Ascending aorta (tissue), 2 donors: ENCODE measurements at regions of chr15 and their contacts with region 1.

Region 1: GRCh38 chr15:50908210-50909009 is at the start of gene AP4E1:
- DNase-seq: peak; percentile 65 to 96
- H3K4me3 ChIP-seq: peak within 1 kb of the TSS; percentile 84 to 88
- H3K27ac ChIP-seq: peak within 1 kb of the TSS; percentile 93 to 96
- H3K4me1 ChIP-seq: peaks cover 0 to 24% of the 10 kb centered on the region in 2 donors
- H3K27me3 ChIP-seq: no peaks in the 10 kb centered on the region
- CTCF ChIP-seq: peak; percentile 89 to 99 (median 93)
- total RNA-seq, gene AP4E1: 5.2 TPM

Region 2: GRCh38 chr15:50354838-50355618 is 553.4 kb before region 1 on chr15 and contains the start of gene GABPB1:
- intact Hi-C with region 1: loop called (anchors 10 kb)
- DNase-seq: peak; percentile 31 to 90
- H3K4me3 ChIP-seq: peak within 1 kb of the TSS; percentile 95 to 99
- H3K27ac ChIP-seq: peak within 1 kb of the TSS; percentile 99 to 100
- H3K4me1 ChIP-seq: peaks cover 12 to 36% of the 10 kb centered on the region in 2 donors
- H3K27me3 ChIP-seq: no peaks in the 10 kb centered on the region
- CTCF ChIP-seq: no peak
- total RNA-seq, gene GABPB1: 10.9 TPM

Region 3: GRCh38 chr15:50675536-50676144 is 232.8 kb before region 1 on chr15:
- intact Hi-C with region 1: loop called (anchors 1 kb)
- DNase-seq: no peak
- H3K4me3 ChIP-seq: no peak overlapping the region
- H3K27ac ChIP-seq: no peak overlapping the region
- H3K4me1 ChIP-seq: no peaks in the 10 kb centered on the region
- H3K27me3 ChIP-seq: no peaks in the 10 kb centered on the region
- CTCF ChIP-seq: peak; percentile 55 to 83 (median 76)

Region 4: GRCh38 chr15:50686468-50687301 is 221.7 kb before region 1 on chr15 and contains the start of gene TRPM7:
- intact Hi-C with region 1: loop called (anchors 2 kb)
- DNase-seq: peak; percentile 24 to 92
- H3K4me3 ChIP-seq: peak within 1 kb of the TSS; percentile 71 to 80
- H3K27ac ChIP-seq: peak within 1 kb of the TSS; percentile 91 to 96
- H3K4me1 ChIP-seq: peaks cover 0 to 21% of the 10 kb centered on the region in 2 donors
- H3K27me3 ChIP-seq: no peaks in the 10 kb centered on the region
- CTCF ChIP-seq: no peak
- total RNA-seq, gene TRPM7: 24.1 TPM

Region 5: GRCh38 chr15:50876989-50877360 is 31.4 kb before region 1 on chr15:
- intact Hi-C with region 1: loop called (anchors 2 kb)
- DNase-seq: peak; percentile 20 to 92
- H3K4me3 ChIP-seq: peak overlapping the region; percentile 41 to 55
- H3K27ac ChIP-seq: no peak overlapping the region
- H3K4me1 ChIP-seq: no peaks in the 10 kb centered on the region
- H3K27me3 ChIP-seq: no peaks in the 10 kb centered on the region
- CTCF ChIP-seq: peak; percentile 81 to 99 (median 98)

Region 6: DNA sequence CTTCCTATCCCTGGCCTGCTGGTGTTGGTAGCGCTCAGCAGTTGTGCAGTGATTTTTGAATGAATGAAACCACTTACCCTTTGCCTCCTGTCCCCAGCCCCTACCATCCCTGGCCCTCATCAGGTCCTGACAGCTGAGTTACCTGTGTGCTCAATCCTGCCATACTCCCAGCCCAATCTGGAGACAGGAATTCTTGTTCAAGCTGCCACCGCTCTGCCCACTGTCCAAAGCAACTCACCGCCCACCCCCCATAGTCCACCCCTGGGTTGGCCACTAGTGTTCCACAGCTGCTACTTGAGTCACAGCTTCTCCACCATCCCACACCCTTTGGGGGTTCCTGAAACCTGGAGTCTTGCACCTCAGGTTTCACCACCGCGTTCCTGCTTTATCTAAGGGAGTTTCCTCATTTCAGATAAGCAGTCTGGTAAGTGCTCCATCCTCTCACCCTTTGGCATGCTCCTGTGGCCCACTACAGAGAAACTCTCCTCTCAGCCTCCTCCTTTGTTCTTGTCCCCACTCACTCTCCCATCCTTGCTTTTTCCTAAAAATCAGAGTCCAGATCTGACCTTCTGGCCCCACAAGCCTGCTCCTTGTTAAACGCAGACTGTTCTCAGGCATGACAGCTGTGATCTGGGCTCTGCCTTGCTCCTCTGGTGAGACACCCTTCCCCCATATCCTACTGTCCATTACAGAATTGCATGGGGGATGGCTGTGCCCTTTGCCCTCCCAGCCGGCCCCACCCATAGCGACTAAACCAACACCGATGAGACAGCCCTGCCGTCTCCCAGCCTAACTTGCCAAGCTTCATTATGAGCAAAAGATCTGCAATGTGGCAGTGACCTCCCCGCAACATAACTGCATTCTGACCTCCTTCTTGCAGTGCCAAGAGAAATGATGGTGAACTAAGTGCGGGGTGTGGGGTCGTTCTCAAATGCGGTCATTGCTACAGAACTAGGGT is 380.0 kb after region 1 on chr15:
- intact Hi-C with region 1: no loop called
- DNase-seq: peak in 1 of 2 donors; percentile 47
- H3K4me3 ChIP-seq: no peak overlapping the region
- H3K27ac ChIP-seq: no peak overlapping the region
- H3K4me1 ChIP-seq: no peaks in the 10 kb centered on the region
- H3K27me3 ChIP-seq: no peaks in the 10 kb centered on the region
- CTCF ChIP-seq: no peak

Region 7: GRCh38 chr15:51366960-51367648 is 458.7 kb after region 1 on chr15:
- intact Hi-C with region 1: no loop called
- DNase-seq: no peak
- H3K4me3 ChIP-seq: no peak overlapping the region
- H3K27ac ChIP-seq: no peak overlapping the region
- H3K4me1 ChIP-seq: no peaks in the 10 kb centered on the region
- H3K27me3 ChIP-seq: no peaks in the 10 kb centered on the region
- CTCF ChIP-seq: no peak